ENCODE measurements at regions of chr10 and their contacts with region 1.

Region 1: GRCh38 chr10:32378363-32379317 is 31.7 kb upstream of the EPC1 start:
- DNase-seq: peak; percentile 88
- H3K4me3 Mint-ChIP-seq: no peak overlapping the region
- H3K27ac Mint-ChIP-seq: no peak overlapping the region
- H3K4me1 Mint-ChIP-seq: peaks cover 26% of the 10 kb centered on the region
- H3K27me3 Mint-ChIP-seq: no peaks in the 10 kb centered on the region

Region 2: DNA sequence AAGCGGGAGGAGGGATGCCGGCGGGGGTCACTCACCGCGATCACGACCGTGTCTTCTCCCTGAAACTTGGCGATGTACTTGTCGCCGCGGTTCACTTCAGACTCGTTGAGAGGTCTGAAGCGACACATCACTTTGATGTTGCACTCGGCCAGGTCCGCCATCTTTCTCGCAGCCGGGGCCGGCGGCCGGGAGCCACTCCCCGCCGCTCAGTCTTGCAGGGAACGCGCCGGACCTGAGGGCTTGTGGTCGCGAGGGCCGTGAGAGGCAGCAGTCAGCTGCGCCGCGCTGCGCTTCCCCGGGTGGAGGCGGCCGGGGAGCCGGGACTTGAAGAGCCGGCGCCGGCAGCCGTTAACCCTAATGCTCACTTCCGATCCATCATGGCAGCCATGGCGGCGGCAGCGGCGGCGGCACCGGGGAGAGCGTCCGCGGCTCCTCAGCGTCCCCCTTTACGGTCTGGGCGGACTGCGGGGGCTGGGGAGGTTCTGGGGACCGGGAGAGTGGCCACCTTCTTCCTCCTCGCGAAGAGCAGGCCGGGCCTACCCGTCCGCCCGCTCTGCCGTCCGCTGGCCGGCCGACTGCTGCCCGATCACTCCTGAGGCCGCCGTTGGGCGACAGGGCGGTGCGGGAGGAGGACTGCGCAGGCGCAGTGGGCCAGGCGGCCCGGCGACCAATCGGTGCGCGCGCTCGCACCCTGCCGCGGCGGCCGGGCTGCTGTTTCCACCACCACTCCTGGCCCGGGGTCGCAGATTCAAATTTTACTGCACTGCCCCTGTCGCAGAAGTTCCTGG is 322.6 kb before region 1 on chr10 and contains the start of gene KIF5B:
- intact Hi-C with region 1: loop called (anchors 5 kb)
- DNase-seq: peak; percentile 85
- H3K4me3 Mint-ChIP-seq: peak within 1 kb of the TSS; percentile 94
- H3K27ac Mint-ChIP-seq: peak within 1 kb of the TSS; percentile 92
- H3K4me1 Mint-ChIP-seq: peaks cover 41% of the 10 kb centered on the region
- H3K27me3 Mint-ChIP-seq: no peaks in the 10 kb centered on the region
- total RNA-seq, gene KIF5B: 80.7 and 83.4 TPM in 2 replicates

Region 3: DNA sequence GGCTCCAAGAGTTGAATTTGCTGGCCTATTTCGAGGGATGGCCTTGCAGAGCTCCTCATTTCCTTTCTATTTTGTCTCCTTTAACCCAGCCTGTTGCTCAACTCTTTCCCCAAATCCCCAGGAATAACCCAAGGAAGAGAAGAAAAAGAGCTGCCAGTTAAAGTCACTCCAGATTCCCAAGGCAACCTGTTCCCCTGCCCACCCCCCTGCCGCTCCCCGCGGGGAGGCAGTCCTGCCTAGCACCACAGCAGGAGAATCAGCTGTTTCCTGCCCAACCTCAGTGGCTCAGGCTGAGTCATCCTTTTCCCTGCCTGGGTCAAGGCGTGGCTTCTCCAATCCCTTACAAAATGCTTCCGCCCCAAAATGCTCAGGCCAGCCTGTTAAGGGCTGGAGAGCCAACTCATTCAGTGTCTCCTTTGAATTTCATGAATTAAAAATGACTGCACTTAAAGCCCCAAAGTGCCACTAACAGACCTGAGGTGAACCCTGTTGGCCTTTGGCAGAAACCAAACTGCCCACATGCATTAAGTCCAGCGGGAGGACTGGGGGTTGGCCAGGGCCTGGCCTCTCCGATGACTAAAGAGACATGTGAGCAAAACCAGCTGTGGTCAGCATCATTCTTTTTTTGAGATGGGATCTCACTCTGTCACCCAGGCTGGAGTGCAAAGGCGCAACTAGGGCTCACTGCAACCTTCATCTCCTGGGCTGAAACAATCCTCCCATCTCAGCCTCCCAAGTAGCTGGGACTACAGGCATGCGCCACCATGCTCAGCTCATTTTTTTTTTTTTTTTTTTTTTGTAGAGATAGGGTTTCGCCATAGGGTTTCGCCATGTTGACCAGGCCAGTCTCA is 239.2 kb before region 1 on chr10:
- intact Hi-C with region 1: no loop called
- DNase-seq: no peak
- H3K4me3 Mint-ChIP-seq: no peak overlapping the region
- H3K27ac Mint-ChIP-seq: no peak overlapping the region
- H3K4me1 Mint-ChIP-seq: peaks cover 9% of the 10 kb centered on the region
- H3K27me3 Mint-ChIP-seq: peaks cover 8% of the 10 kb centered on the region

Region 4: GRCh38 chr10:32239770-32240169 is 138.9 kb before region 1 on chr10:
- intact Hi-C with region 1: loop called (anchors 1 kb)
- DNase-seq: no peak
- H3K4me3 Mint-ChIP-seq: no peak overlapping the region
- H3K27ac Mint-ChIP-seq: no peak overlapping the region
- H3K4me1 Mint-ChIP-seq: peaks cover 16% of the 10 kb centered on the region
- H3K27me3 Mint-ChIP-seq: no peaks in the 10 kb centered on the region

Region 5: DNA sequence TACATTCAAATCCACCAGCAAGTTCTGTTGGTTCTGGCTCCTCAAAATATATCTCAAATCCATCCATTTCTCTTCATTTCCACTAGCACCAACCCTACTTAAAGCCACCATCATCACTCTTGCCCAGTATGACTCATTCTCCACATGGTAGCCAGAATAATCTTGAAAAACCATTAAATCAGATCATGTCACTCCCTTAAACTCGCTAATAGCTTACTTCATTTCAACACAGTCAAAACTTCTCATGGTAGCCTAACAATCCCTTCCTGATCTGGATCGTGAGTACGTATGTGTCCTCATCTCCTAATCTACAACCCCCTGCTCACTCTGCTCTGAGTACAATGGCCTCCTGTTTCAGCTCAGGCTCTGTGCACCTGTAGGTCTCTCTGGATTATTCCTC is 40.4 kb before region 1 on chr10:
- intact Hi-C with region 1: no loop called
- DNase-seq: no peak
- H3K4me3 Mint-ChIP-seq: no peak overlapping the region
- H3K27ac Mint-ChIP-seq: peak overlapping the region; percentile 53
- H3K4me1 Mint-ChIP-seq: peaks cover 85% of the 10 kb centered on the region
- H3K27me3 Mint-ChIP-seq: no peaks in the 10 kb centered on the region

Region 6: DNA sequence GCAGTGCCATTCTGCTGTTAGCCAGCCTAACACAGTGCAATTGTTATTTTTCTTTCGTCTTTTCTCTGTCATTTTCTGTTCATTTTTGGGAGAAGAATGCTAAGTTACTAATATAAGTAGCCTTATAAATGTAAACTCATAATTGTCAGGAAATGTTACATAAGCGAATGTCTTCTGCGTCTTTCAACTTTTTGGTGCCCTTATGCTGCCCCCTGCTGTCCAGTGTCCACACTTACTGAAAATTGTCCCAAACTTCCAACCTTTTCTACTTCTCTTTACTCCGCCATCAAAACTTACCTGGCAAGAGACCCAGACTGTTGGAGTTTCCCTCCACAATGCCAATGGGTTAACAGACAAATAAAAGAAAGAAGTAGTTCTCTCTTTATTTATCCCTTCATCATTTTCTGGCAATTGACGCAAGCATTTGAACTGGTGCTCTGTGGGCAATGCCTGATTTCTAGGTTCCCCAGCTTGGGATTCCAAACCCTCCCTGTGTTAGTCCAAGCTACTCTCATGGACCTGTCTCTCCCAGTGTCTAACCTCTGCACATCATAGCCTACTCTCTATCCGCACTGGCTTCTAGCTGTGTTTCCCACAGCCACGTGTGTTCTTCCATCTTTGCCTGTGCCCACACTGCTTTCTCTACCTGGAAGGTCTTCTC is 10.7 kb before region 1 on chr10:
- intact Hi-C with region 1: loop called (anchors 1 kb)
- DNase-seq: peak; percentile 49
- H3K4me3 Mint-ChIP-seq: no peak overlapping the region
- H3K27ac Mint-ChIP-seq: peak overlapping the region; percentile 8
- H3K4me1 Mint-ChIP-seq: peaks cover 45% of the 10 kb centered on the region
- H3K27me3 Mint-ChIP-seq: no peaks in the 10 kb centered on the region

Region 7: GRCh38 chr10:32958085-32959005 is 579.7 kb after region 1 on chr10 and contains the start of gene ITGB1:
- intact Hi-C with region 1: loop called (anchors 5 kb)
- DNase-seq: peak; percentile 81
- H3K4me3 Mint-ChIP-seq: peak within 1 kb of the TSS; percentile 86
- H3K27ac Mint-ChIP-seq: peak within 1 kb of the TSS; percentile 93
- H3K4me1 Mint-ChIP-seq: peaks cover 35% of the 10 kb centered on the region
- H3K27me3 Mint-ChIP-seq: peaks cover 12% of the 10 kb centered on the region
- total RNA-seq, gene ITGB1: 51.4 and 61.4 TPM in 2 replicates

Region 8: GRCh38 chr10:33134011-33134751 is 755.5 kb after region 1 on chr10:
- intact Hi-C with region 1: loop called (anchors 5 kb)
- DNase-seq: peak; percentile 48
- H3K4me3 Mint-ChIP-seq: peak overlapping the region; percentile 48
- H3K27ac Mint-ChIP-seq: peak overlapping the region; percentile 88
- H3K4me1 Mint-ChIP-seq: peaks cover 61% of the 10 kb centered on the region
- H3K27me3 Mint-ChIP-seq: no peaks in the 10 kb centered on the region

Measured in activated T-helper 1 cell treated with anti-CD3 and anti-CD28 coated beads, Interleukin-12 subunit alpha, Interleukin-12 subunit beta, Interleukin-2, Interleukin-4 antibody, amounts not matched to agents 30 ng/mL and 10 ng/mL and 1 ng/mL, durations not matched to agents 14 hours and 24 hours and 36 hours (primary cell).